ENCODE measurements at regions of chr16 and their contacts with region 1.

Region 1: GRCh38 chr16:21656795-21657768 is 4.7 kb upstream of the IGSF6 start:
- DNase-seq: peak; percentile 56
- H3K4me3 Mint-ChIP-seq: no peak overlapping the region
- H3K27ac Mint-ChIP-seq: no peak overlapping the region
- H3K4me1 Mint-ChIP-seq: peaks cover 30% of the 10 kb centered on the region
- H3K27me3 Mint-ChIP-seq: no peaks in the 10 kb centered on the region

Region 2: DNA sequence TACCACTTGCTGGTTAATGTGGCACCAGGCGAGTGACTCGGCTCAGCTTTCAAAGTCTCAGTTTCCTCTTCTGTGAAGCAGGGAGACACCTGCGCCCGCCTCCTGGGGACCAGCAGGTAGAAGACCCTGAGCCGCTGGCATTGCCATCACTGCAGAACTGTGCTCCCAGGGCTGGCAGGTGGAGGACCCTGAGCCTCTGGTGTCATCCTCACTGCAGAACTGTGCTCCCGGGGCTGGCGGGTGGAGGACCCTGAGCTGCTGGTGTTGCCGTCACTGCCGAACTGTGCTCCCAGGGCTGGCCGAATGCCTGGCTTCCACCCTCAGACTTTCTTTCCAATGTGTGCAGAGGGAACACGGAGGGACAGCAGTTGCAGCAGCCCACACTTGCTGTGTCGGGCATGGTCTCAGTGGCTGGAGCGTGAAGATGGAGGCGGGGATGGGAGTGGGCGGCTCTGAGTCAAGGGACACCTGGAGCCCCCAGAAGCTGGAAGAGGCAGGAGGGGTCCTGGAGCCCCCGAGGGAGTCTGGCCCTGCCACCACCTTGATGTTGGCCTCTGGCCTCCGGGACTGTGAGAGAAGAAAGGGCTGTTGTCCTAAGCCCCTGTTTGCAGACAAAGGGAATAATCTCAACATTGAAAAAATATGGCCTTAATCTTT is 133.5 kb before region 1 on chr16:
- CTCF ChIA-PET with region 1: no interaction called
- intact Hi-C with region 1: no loop called
- DNase-seq: no peak
- H3K4me3 Mint-ChIP-seq: no peak overlapping the region
- H3K27ac Mint-ChIP-seq: no peak overlapping the region
- H3K4me1 Mint-ChIP-seq: no peaks in the 10 kb centered on the region
- H3K27me3 Mint-ChIP-seq: no peaks in the 10 kb centered on the region

Region 3: GRCh38 chr16:21646721-21647561 is 10.1 kb before region 1 on chr16:
- CTCF ChIA-PET with region 1: interaction called, 61 read pairs
- intact Hi-C with region 1: loop called (anchors 2 kb)
- DNase-seq: peak; percentile 91
- H3K4me3 Mint-ChIP-seq: peak overlapping the region; percentile 25
- H3K27ac Mint-ChIP-seq: peak overlapping the region; percentile 76
- H3K4me1 Mint-ChIP-seq: peaks cover 49% of the 10 kb centered on the region
- H3K27me3 Mint-ChIP-seq: no peaks in the 10 kb centered on the region

Region 4: GRCh38 chr16:21673469-21673868 is 16.4 kb after region 1 on chr16:
- CTCF ChIA-PET with region 1: interaction called, 12 read pairs
- intact Hi-C with region 1: no loop called
- DNase-seq: no peak
- H3K4me3 Mint-ChIP-seq: no peak overlapping the region
- H3K27ac Mint-ChIP-seq: no peak overlapping the region
- H3K4me1 Mint-ChIP-seq: no peaks in the 10 kb centered on the region
- H3K27me3 Mint-ChIP-seq: no peaks in the 10 kb centered on the region

Region 5: DNA sequence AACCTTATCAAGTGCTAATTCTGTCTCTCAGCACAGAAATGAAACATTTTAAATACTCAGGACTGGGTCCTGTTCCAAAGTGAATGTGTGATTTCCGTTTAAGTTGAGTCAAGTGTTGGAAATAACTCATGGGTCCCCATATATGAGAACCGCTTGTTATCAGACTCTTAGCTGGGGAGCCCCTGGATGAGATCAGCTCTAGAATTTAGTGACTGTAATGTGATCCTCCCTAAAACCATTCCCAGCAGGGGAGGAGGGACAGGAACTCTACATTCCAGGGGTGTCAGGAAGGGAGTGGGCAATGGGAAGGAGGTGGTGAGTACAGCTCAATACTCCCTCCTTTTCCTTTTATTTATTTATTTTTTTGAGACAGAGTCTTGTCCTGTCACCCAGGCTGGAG is 44.2 kb after region 1 on chr16:
- CTCF ChIA-PET with region 1: interaction called, 49 read pairs
- intact Hi-C with region 1: no loop called
- DNase-seq: no peak
- H3K4me3 Mint-ChIP-seq: no peak overlapping the region
- H3K27ac Mint-ChIP-seq: no peak overlapping the region
- H3K4me1 Mint-ChIP-seq: no peaks in the 10 kb centered on the region
- H3K27me3 Mint-ChIP-seq: no peaks in the 10 kb centered on the region

Region 6: GRCh38 chr16:21708533-21709115 is 51.5 kb after region 1 on chr16:
- CTCF ChIA-PET with region 1: interaction called, 49 read pairs
- intact Hi-C with region 1: loop called (anchors 1 kb)
- DNase-seq: peak; percentile 96
- H3K4me3 Mint-ChIP-seq: no peak overlapping the region
- H3K27ac Mint-ChIP-seq: no peak overlapping the region
- H3K4me1 Mint-ChIP-seq: peaks cover 4% of the 10 kb centered on the region
- H3K27me3 Mint-ChIP-seq: no peaks in the 10 kb centered on the region